WTC11 (cell line): ENCODE measurements at regions of chr20 and their contacts with region 1.

Region 1: GRCh38 chr20:4082406-4083097 is 67.2 kb upstream of the RNF24 start:
- DNase-seq: peak; percentile 57
- ATAC-seq: peak; percentile 66
- H3K4me3 Mint-ChIP-seq: peak overlapping the region; percentile 32
- H3K27ac Mint-ChIP-seq: peak overlapping the region; percentile 68
- H3K4me1 Mint-ChIP-seq: peaks cover 25% of the 10 kb centered on the region
- H3K27me3 Mint-ChIP-seq: peaks cover 19% of the 10 kb centered on the region
- CTCF ChIP-seq: no peak

Region 2: GRCh38 chr20:3786665-3787323 is 295.8 kb before region 1 on chr20 and contains the start of gene CENPB:
- CTCF ChIA-PET with region 1: interaction called, 12 read pairs
- POLR2A ChIA-PET with region 1: no interaction called
- DNase-seq: peak; percentile 89
- ATAC-seq: peak; percentile 81
- H3K4me3 Mint-ChIP-seq: peak within 1 kb of the TSS; percentile 83
- H3K27ac Mint-ChIP-seq: no peak within 1 kb of the TSS
- H3K4me1 Mint-ChIP-seq: peaks cover 20% of the 10 kb centered on the region
- H3K27me3 Mint-ChIP-seq: peaks cover 24% of the 10 kb centered on the region
- CTCF ChIP-seq: peak; percentile 65; the same call in 1 of the 2 replicates
- total RNA-seq, gene CENPB: 55.3 to 58.7 TPM (median 57.6 TPM) in 3 replicates

Region 3: DNA sequence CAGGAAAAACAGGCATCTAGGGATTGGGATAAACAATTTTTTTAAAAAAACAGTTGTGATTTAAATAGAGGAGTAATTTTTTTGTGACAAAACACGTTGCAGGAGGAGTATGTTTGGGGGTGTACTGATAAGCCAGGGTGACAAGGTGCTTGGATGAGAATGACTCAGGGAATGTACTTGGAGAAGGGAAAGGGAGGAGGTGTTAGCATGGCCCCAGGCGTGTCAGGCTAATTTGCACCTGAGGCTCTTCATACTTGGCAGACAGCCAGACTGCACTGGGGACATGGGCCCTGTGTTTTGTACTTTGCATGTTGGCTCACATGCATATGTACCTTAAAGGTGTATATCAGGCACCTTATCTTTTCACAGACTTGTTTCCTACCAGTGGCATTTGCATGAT is 170.6 kb before region 1 on chr20:
- CTCF ChIA-PET with region 1: no interaction called
- POLR2A ChIA-PET with region 1: no interaction called
- DNase-seq: no peak
- ATAC-seq: no peak
- H3K4me3 Mint-ChIP-seq: no peak overlapping the region
- H3K27ac Mint-ChIP-seq: no peak overlapping the region
- H3K4me1 Mint-ChIP-seq: no peaks in the 10 kb centered on the region
- H3K27me3 Mint-ChIP-seq: no peaks in the 10 kb centered on the region
- CTCF ChIP-seq: no peak

Region 4: DNA sequence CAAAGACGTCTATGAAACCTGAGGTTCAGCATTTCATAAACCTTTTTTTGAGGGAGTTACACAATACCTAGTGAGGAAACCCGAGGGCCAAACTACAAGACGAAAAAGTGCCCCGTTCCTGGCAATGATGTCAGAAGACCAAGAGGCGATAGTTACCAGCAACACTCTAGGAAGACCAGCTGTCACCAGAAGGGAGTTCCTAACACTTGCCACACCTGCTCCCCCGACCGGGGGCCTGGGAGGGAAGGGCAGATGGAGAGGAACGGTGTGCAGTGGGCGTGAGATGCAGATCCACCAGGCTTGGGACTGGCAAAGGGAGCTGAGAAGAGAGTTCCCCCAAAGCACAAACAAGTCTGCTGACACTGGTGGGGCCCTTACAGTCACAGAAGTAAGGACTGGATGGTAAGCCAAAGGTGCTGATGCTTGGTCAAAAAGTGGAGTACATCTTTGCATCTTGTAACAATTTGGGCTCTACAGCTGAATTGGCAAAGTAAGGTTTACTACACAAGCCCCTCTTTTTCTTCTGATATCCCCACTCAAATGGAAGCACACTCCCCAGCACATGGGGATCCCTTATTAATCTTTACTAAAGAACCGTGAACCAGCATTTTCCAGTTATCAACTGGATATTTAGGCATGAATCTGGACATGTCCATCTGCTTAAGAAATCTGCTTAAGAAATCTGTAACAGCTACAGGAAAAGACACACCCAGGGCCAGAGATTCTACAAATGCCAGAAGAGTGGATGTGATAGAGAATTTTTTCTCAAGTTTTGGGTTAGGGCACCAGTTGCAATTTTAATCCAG is 154.9 kb before region 1 on chr20:
- CTCF ChIA-PET with region 1: interaction called, 10 read pairs
- POLR2A ChIA-PET with region 1: no interaction called
- DNase-seq: no peak
- ATAC-seq: no peak; the same call in 1 of the 2 replicates
- H3K4me3 Mint-ChIP-seq: no peak overlapping the region
- H3K27ac Mint-ChIP-seq: peak overlapping the region; percentile 74
- H3K4me1 Mint-ChIP-seq: peaks cover 29% of the 10 kb centered on the region
- H3K27me3 Mint-ChIP-seq: no peaks in the 10 kb centered on the region
- CTCF ChIP-seq: no peak

Region 5: GRCh38 chr20:4064144-4064909 is 18.2 kb before region 1 on chr20:
- CTCF ChIA-PET with region 1: interaction called, 11 read pairs
- POLR2A ChIA-PET with region 1: interaction called, 3 read pairs
- DNase-seq: peak; percentile 53
- ATAC-seq: peak; percentile 90
- H3K4me3 Mint-ChIP-seq: peak overlapping the region; percentile 8; the same call in 1 of the 2 replicates
- H3K27ac Mint-ChIP-seq: peak overlapping the region; percentile 64
- H3K4me1 Mint-ChIP-seq: peaks cover 47% of the 10 kb centered on the region
- H3K27me3 Mint-ChIP-seq: no peaks in the 10 kb centered on the region; the same call in 1 of the 2 replicates
- CTCF ChIP-seq: no peak

Region 6: GRCh38 chr20:4130404-4131189 is 48.0 kb after region 1 on chr20:
- CTCF ChIA-PET with region 1: no interaction called
- POLR2A ChIA-PET with region 1: no interaction called
- DNase-seq: no peak
- ATAC-seq: no peak
- H3K4me3 Mint-ChIP-seq: no peak overlapping the region
- H3K27ac Mint-ChIP-seq: no peak overlapping the region
- H3K4me1 Mint-ChIP-seq: peaks cover 14% of the 10 kb centered on the region
- H3K27me3 Mint-ChIP-seq: peaks cover 10% of the 10 kb centered on the region
- CTCF ChIP-seq: no peak

Region 7: DNA sequence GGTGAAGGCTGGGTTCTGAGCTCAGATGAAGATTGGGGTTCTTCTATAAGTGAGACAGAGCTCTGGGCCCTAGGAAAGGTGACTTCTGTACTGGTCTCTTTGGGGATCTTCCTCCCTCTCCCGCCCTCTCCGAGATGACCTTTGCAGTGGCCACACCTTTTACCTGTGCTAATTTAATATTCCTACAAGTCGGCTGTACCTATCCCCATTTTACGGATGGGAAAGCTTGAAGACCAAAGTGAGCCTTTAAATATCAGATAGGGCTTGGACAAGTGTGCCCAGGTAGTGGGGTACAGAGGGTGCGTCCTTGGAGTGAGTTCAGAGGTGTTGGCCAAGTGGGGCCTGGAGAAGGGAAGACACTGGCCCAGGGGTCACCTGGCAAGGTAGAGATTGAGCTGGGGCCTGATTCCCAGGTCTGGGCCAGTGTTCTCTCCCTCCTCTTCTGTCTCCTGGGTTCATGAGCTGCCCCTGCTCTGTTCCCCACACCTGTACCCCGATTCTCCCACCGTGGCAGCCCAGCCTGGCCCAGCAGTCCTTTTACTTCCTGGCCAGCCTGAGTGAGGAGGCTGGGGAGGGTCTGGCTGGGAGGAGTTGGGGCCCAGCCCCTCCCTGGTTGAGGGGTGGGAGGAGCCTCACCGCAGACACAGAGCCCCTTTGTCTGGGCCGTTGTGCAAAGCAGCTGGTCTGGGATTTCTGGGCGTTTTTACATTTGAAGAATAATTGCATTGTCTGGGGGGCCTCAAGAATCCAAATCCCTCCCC is 84.9 kb after region 1 on chr20:
- CTCF ChIA-PET with region 1: interaction called, 12 read pairs
- POLR2A ChIA-PET with region 1: interaction called, 3 read pairs
- DNase-seq: peak; percentile 48
- ATAC-seq: peak; percentile 59
- H3K4me3 Mint-ChIP-seq: peak overlapping the region; percentile 33; the same call in 1 of the 2 replicates
- H3K27ac Mint-ChIP-seq: no peak overlapping the region
- H3K4me1 Mint-ChIP-seq: peaks cover 53% of the 10 kb centered on the region
- H3K27me3 Mint-ChIP-seq: no peaks in the 10 kb centered on the region; the same call in 1 of the 2 replicates
- CTCF ChIP-seq: no peak